ENCODE measurements at regions of chr3 and their contacts with region 1.

Region 1: GRCh38 chr3:51670823-51671733 is at the start of gene TEX264:
- DNase-seq: peak; percentile 71 to 92 (median 84)
- H3K4me3 ChIP-seq: peak within 1 kb of the TSS; percentile 77 to 100 (median 93)
- H3K27ac ChIP-seq: peak within 1 kb of the TSS; percentile 23 to 95 (median 86)
- H3K27me3 ChIP-seq: no peaks in the 10 kb centered on the region
- CTCF ChIP-seq: peak in 26 of 56 donors; percentile 3 to 58 (median 32)
- total RNA-seq, gene TEX264: 26.0 to 48.6 (median 36.4) TPM

Region 2: DNA sequence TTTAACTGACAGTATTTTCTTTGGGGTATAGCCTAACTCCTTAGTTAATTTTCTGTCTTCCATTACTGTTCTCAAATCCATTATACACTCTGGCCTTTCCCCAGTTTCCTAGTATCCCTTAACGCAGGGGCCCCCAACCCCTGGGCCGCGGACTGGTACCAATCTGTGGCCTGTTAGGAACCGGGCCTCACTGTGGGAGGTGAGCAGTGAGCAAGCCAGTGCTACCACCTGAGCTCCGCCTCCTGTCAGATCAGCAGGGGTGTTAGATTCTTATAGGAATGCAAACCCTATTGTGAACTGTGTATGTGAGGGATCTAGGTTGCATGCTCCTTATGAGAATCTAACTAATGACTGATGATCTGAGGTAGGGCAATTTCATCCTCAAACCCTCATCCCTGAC is 921.3 kb before region 1 on chr3:
- intact Hi-C with region 1: no loop called
- DNase-seq: no peak
- H3K4me3 ChIP-seq: no peak overlapping the region
- H3K27ac ChIP-seq: no peak overlapping the region
- H3K27me3 ChIP-seq: no peaks in the 10 kb centered on the region
- CTCF ChIP-seq: no peak

Region 3: DNA sequence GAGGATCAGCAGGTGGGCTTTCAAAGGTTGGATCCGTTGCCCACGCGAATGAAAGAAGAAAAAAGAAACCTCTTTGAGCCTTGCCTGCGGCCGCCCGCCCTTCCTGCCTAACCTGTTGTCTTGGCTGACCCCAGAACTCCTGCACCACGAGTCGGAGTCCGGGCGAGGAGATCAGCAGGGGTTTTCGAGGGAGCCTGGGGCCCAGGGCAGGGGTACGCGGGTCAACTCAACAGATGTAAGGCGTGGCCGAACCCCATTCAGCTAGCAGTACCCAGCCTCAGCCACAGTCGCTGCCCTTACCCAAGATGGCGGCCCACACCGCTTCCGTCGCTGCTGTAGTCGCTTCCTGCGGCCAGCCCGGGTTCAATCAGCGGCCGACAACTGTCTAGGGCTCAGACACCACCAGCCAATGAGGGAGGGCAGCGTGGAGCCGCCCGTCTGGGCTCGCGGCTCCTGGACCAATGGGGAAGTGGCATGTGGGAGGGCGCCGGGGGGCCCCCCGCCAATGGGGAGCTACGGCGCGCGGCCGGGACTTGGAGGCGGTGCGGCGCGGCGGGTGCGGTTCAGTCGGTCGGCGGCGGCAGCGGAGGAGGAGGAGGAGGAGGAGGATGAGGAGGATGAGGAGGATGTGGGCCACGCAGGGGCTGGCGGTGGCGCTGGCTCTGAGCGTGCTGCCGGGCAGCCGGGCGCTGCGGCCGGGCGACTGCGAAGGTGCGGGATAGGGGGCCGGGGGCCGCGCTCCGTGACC is 286.2 kb before region 1 on chr3 and contains the start of gene MANF:
- intact Hi-C with region 1: loop called (anchors 5 kb)
- DNase-seq: peak; percentile 92 to 99 (median 98)
- H3K4me3 ChIP-seq: peak within 1 kb of the TSS; percentile 65 to 99 (median 93)
- H3K27ac ChIP-seq: peak within 1 kb of the TSS; percentile 34 to 98 (median 94)
- H3K27me3 ChIP-seq: no peaks in the 10 kb centered on the region
- CTCF ChIP-seq: peak in 35 of 56 donors; percentile 9 to 59 (median 37)
- total RNA-seq, gene MANF: 12.0 to 80.8 (median 29.0) TPM

Region 4: DNA sequence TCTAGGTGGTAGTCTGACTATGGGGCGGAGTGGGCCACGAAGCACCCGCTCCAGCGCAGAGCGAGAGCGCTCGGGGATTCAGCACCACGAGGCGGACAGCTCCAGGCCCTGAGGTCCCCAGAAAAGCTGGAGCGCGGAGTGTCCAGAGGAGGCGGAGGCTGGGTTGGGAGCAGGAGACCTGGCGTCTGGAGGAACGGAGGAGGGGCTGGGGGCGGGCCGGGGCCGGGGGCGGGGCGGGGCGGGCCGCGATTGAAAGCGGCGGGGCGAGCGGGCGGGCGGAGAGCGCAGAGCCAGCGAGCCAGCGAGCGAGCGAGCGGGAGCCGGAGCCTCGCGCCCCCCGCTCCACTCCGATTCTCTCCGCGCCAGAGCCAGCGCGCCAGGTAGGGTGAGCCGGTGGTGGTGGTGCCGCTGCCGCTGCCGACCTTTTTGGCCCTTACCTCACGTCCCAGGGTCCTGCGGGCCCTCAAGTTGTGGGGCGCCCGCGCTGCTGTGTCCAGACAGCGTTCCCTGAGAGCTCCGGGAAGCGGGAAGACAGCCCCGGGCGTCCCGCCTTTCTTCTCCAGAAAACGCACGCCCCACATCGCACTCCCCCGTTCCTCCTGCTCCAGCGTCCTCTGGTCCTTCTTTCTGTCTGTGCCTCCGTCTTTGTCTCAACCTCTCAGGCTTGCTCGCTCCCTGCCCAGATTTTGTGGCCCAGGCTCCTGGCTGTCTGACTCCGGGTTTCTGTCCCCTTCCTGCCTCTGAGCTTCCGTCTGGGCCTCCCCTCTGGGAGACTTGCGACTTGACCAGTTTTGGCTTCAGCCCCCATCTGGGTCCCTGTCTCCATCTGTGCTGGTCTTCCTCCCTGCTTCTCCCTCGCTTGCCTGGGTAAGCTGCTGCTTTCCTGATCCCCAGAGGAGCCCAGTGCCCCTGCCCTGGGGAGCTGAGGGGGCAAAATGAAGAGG is 36.0 kb after region 1 on chr3 and contains the start of gene GRM2:
- intact Hi-C with region 1: loop called in 1 of 2 experiments (anchors 1 kb)
- DNase-seq: peak in 8 of 10 donors; percentile 20 to 68 (median 56)
- H3K4me3 ChIP-seq: peak within 1 kb of the TSS; percentile 1 to 67 (median 50)
- H3K27ac ChIP-seq: peak within 1 kb of the TSS in 51 of 59 donors; percentile 19 to 85 (median 60)
- H3K27me3 ChIP-seq: no peaks in the 10 kb centered on the region
- CTCF ChIP-seq: peak in 1 of 56 donors; percentile 7
- total RNA-seq, gene GRM2: 8.1 to 42.6 (median 23.1) TPM

Region 5: GRCh38 chr3:51941798-51942602 is 270.9 kb after region 1 on chr3 and contains the starts of genes PARP3 and RRP9:
- intact Hi-C with region 1: no loop called
- DNase-seq: peak; percentile 99 to 100 (median 100)
- H3K4me3 ChIP-seq: peak within 1 kb of the TSS; percentile 59 to 100 (median 84)
- H3K27ac ChIP-seq: peak within 1 kb of the TSS; percentile 80 to 99 (median 96)
- H3K27me3 ChIP-seq: no peaks in the 10 kb centered on the region
- CTCF ChIP-seq: peak; percentile 96 to 100 (median 100)
- total RNA-seq, gene PARP3: 12.4 to 30.0 (median 19.8) TPM
- total RNA-seq, gene RRP9: 7.7 to 17.5 (median 12.5) TPM

Measured in dorsolateral prefrontal cortex (tissue), 120 donors.